Astrocyte of the cerebellum (primary cell): ENCODE measurements at regions of chr15 and their contacts with region 1.

Region 1: GRCh38 chr15:83123529-83123928 is 16.1 kb downstream of the TM6SF1 start:
- DNase-seq: no peak
- H3K4me3 ChIP-seq: no peak overlapping the region
- CTCF ChIP-seq: no peak

Region 2: GRCh38 chr15:82862886-82863285 is 260.6 kb before region 1 on chr15:
- in situ Hi-C with region 1: no loop called
- DNase-seq: no peak
- H3K4me3 ChIP-seq: no peak overlapping the region
- CTCF ChIP-seq: no peak

Region 3: DNA sequence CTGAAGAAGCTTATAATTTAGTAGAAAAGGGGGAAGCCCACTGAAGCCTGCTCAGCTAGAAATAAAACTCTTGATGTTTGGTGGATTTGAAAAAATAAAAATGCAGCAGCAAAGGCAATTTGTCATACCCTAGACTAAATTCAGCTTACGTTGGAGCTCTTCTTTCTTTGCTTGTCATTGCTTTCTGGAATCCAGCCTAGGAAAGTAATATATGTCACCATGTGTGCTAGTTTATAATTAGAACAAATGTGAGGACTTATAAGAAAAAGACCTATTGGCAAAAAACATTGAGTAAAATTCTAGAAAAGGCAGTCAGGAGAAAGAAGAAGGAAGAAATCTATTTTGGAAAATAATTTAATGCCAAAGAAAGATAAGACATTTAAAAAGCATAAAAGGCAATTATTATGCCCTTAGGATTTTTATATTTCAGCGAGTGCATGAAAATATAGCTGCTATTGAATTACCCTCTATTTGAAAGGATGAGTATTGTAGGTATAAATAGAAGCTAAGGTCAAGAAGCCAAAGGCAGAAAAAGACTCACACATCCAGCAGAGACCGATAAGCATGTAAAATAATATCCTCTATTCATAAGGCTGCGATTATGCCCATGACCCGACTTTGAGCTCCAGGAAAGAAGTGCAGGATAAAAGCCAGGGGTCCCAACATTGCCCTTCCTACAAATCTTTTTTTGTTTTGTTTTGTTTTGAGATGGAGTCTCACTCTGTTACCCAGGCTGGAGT is 45.9 kb before region 1 on chr15:
- in situ Hi-C with region 1: no loop called
- DNase-seq: no peak
- H3K4me3 ChIP-seq: no peak overlapping the region
- CTCF ChIP-seq: no peak

Region 4: DNA sequence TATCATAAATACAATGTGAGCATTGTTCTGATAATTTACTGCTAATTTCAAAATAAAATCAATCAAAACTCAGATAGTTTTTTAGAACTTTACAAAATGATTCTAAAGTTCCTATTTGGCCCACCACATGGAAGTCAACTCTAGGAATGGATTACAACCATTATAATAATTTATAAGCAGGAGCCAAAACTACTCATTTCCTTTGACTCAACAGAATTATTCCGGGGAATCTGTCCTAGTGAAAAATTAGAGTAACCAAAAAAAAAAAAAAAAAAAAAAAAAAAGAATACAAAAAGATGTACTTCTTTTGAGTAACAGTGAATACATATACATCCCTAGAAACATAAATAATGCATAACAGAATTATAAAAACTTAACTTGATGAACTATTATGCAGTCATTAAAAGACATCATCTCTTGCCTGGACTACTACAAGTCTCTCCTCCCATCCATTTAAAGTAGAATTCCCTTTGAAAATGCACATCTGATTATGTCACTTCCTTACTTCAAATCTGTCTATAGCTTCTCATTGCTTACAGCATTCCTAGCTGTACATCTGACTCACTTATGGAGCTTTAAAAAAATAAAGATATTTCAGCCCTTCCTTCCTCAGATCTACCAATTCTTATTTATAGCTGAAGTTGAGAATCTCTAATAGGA is 40.7 kb after region 1 on chr15:
- in situ Hi-C with region 1: loop called (anchors 5 kb)
- DNase-seq: no peak
- H3K4me3 ChIP-seq: no peak overlapping the region
- CTCF ChIP-seq: no peak